Naive thymus-derived CD4-positive, alpha-beta T cell (primary cell): ENCODE measurements at regions of chr17 and their contacts with region 1.

Region 1: GRCh38 chr17:2814481-2815341 is 18.5 kb downstream of the RAP1GAP2 start:
- DNase-seq: peak; percentile 68 to 98 (median 98)
- ATAC-seq: peak; percentile 91
- H3K4me3 ChIP-seq: peak overlapping the region; percentile 66
- H3K4me3 Mint-ChIP-seq: peak overlapping the region; percentile 56 to 84 (median 76)
- H3K27ac ChIP-seq: peak overlapping the region; percentile 52
- H3K27ac Mint-ChIP-seq: peak overlapping the region; percentile 34 to 95 (median 88)
- H3K4me1 ChIP-seq: peaks cover 20 to 21% of the 10 kb centered on the region in 2 donors
- H3K4me1 Mint-ChIP-seq: peaks cover 4 to 41% (median 35%) of the 10 kb centered on the region in 7 donors
- H3K27me3 ChIP-seq: no peaks in the 10 kb centered on the region
- H3K27me3 Mint-ChIP-seq: peaks cover 0 to 34% (median 0%) of the 10 kb centered on the region in 5 donors

Region 2: DNA sequence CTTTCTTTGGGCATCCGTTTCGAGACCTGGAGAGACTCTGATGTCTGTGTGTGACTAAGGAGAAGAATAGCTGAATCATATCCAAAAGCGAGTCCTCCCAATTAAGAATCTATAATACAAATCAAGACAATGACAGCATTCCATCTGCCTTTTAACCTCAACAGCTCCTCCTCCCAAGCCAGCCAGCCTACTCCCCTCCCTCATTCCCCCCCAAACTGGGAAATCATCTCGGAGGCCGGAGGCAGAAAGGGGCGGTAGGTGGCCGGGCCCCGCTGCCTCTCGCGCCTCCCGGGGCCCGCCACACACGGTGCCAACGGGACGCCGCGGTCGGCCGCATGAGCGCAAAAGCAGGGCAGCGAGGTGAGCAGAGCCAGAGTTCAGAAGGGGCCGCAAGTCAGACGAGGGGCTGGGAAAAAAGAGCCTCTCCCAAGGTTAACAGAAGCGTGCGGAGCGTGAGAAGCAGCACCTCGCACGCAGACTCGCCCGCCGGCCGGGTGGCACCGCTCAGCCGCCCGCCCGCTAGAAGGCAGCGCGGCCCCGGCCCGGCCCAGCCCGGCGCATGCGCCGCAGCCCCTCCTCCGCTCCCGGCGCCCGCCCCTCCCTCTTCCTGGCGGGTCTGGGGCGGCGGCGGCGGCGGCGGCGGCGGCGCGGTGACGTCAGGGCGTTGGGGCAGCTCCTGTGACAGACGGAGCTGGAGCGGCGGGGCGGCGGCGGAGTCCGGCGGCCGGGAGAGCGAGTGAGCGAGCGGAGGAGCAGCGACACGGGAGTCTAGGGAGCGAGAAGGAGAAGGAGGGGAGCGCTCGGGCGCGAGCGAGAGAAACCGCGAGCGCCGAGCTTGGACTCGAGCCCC is 221.5 kb before region 1 on chr17 and contains the start of gene PAFAH1B1:
- CTCF ChIA-PET with region 1: no interaction called
- POLR2A ChIA-PET with region 1: no interaction called
- intact Hi-C with region 1: loop called (anchors 1 to 10 kb)
- DNase-seq: peak; percentile 94 to 99 (median 97)
- ATAC-seq: peak; percentile 90
- H3K4me3 ChIP-seq: peak within 1 kb of the TSS; percentile 69
- H3K4me3 Mint-ChIP-seq: peak within 1 kb of the TSS; percentile 87 to 97 (median 92)
- H3K27ac ChIP-seq: peak within 1 kb of the TSS; percentile 90
- H3K27ac Mint-ChIP-seq: peak within 1 kb of the TSS; percentile 85 to 96 (median 92)
- H3K4me1 ChIP-seq: peaks cover 23 to 31% of the 10 kb centered on the region in 2 donors
- H3K4me1 Mint-ChIP-seq: peaks cover 20 to 38% (median 28%) of the 10 kb centered on the region in 7 donors
- H3K27me3 ChIP-seq: no peaks in the 10 kb centered on the region
- H3K27me3 Mint-ChIP-seq: peaks cover 0 to 6% (median 0%) of the 10 kb centered on the region in 5 donors
- total RNA-seq, gene PAFAH1B1: 112 to 156 (median 140) TPM

Region 3: GRCh38 chr17:2796164-2797125 is 18.3 kb before region 1 on chr17 and contains the start of gene RAP1GAP2:
- CTCF ChIA-PET with region 1: interaction called, 12 read pairs
- POLR2A ChIA-PET with region 1: interaction called, 28 read pairs
- intact Hi-C with region 1: loop called (anchors 1 kb)
- DNase-seq: peak; percentile 49 to 75 (median 66)
- ATAC-seq: peak; percentile 91
- H3K4me3 ChIP-seq: peak within 1 kb of the TSS; percentile 87
- H3K4me3 Mint-ChIP-seq: peak within 1 kb of the TSS; percentile 83 to 100 (median 93)
- H3K27ac ChIP-seq: no peak within 1 kb of the TSS
- H3K27ac Mint-ChIP-seq: peak within 1 kb of the TSS; percentile 53 to 91 (median 74)
- H3K4me1 ChIP-seq: peaks cover 52 to 61% of the 10 kb centered on the region in 2 donors
- H3K4me1 Mint-ChIP-seq: peaks cover 58 to 86% (median 74%) of the 10 kb centered on the region in 7 donors
- H3K27me3 ChIP-seq: no peaks in the 10 kb centered on the region
- H3K27me3 Mint-ChIP-seq: peaks cover 0 to 4% (median 0%) of the 10 kb centered on the region in 5 donors
- total RNA-seq, gene RAP1GAP2: 0.54 to 95.6 (median 20.8) TPM

Region 4: DNA sequence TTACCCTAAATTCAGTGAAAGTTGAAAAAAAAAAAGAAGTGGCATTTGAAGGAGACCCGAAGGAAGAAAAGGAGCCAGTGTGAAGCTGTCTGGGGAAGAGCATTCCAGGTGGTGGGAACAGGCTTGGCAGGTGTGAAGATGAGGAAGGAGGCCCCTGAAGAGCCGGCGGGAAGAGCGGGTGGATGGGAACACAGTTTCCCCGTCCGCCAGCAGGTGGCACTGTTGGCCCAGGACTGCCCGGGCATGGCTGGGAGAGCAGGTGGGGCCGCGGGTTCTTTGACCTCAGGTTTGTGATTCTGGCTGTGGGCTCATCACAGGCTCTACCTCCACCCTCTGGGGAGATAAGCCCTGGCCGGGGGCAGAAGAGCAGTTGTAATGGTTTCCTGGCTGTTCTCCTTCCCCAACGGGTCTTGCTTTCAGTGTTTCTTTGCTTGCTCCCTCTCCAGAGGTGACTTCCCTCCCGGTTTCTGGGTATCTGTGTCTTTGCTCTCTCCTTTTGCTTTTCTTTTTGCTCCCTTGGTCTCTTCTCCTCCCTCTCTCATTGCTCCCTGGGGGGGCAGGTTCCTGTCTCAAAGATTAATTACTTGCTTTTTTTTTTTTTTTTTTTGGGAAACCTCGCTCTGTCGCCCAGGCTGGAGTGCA is 13.8 kb after region 1 on chr17:
- CTCF ChIA-PET with region 1: interaction called, 13 read pairs
- POLR2A ChIA-PET with region 1: interaction called, 6 read pairs
- intact Hi-C with region 1: loop called in 1 of 2 experiments (anchors 1 kb)
- DNase-seq: peak; percentile 48 to 85 (median 65)
- ATAC-seq: peak; percentile 92
- H3K4me3 ChIP-seq: peak overlapping the region; percentile 40
- H3K4me3 Mint-ChIP-seq: peak overlapping the region in 9 of 10 donors; percentile 30 to 82 (median 56)
- H3K27ac ChIP-seq: no peak overlapping the region
- H3K27ac Mint-ChIP-seq: peak overlapping the region in 3 of 9 donors; percentile 34 to 76 (median 68)
- H3K4me1 ChIP-seq: peaks cover 8% of the 10 kb centered on the region in 2 donors
- H3K4me1 Mint-ChIP-seq: peaks cover 23 to 34% (median 29%) of the 10 kb centered on the region in 7 donors
- H3K27me3 ChIP-seq: no peaks in the 10 kb centered on the region
- H3K27me3 Mint-ChIP-seq: peaks cover 0 to 13% (median 1%) of the 10 kb centered on the region in 5 donors

Region 5: GRCh38 chr17:2844416-2844815 is 29.7 kb after region 1 on chr17:
- CTCF ChIA-PET with region 1: interaction called, 3 read pairs
- POLR2A ChIA-PET with region 1: interaction called, 3 read pairs
- intact Hi-C with region 1: loop called in 1 of 2 experiments (anchors 2 kb)
- DNase-seq: no peak
- ATAC-seq: no peak
- H3K4me3 ChIP-seq: no peak overlapping the region
- H3K4me3 Mint-ChIP-seq: no peak overlapping the region
- H3K27ac ChIP-seq: no peak overlapping the region
- H3K27ac Mint-ChIP-seq: no peak overlapping the region
- H3K4me1 ChIP-seq: peaks cover 0 to 3% of the 10 kb centered on the region in 2 donors
- H3K4me1 Mint-ChIP-seq: peaks cover 13 to 23% (median 17%) of the 10 kb centered on the region in 7 donors
- H3K27me3 ChIP-seq: no peaks in the 10 kb centered on the region
- H3K27me3 Mint-ChIP-seq: peaks cover 0 to 5% (median 4%) of the 10 kb centered on the region in 5 donors